ENCODE measurements at regions of chr3 and their contacts with region 1.

Region 1: GRCh38 chr3:138915503-138916498 is 31.1 kb downstream of the FOXL2 start:
- DNase-seq: peak; percentile 93
- H3K4me3 ChIP-seq: peak overlapping the region; percentile 64 to 91
- H3K27ac ChIP-seq: peak overlapping the region in 1 of 2 experiments; percentile 76; a peak in 2 of 4 replicates
- H3K4me1 ChIP-seq: peaks cover 0 to 3% of the 10 kb centered on the region in 2 experiments; a peak in 1 of 4 replicates
- H3K27me3 ChIP-seq: no peaks in the 10 kb centered on the region
- CTCF ChIP-seq: peak; percentile 82
- EP300 ChIP-seq: no peak
- RAD21 ChIP-seq: peak; percentile 65

Region 2: DNA sequence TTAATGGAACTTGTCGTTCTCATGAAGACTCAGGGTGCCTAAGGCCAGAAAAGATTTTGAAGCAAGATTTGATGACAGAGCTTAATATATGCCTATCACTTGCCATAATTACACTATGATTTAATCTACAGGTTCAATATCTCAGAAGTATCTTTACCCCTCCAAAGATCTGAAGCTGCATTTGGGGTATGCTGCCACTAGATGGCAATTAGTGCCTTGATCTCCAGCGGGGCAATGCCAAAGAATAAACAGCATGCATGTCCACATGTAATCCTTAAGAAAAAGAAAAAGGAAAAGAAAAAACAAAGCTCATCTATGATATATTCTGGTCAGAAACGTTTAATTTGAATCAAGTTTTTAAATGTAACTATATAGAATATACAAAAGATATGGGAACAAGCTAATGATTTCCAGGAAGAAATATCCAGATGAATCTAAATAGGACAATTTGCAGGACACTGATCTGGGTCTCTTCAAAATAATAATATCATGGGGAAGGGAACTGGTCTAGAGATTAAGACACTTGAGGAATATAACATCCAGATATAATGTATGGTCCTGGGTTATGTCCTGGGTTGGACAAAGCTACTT is 1206.7 kb before region 1 on chr3:
- CTCF ChIA-PET with region 1: no interaction called
- POLR2A ChIA-PET with region 1: no interaction called
- DNase-seq: peak; percentile 26
- H3K4me3 ChIP-seq: no peak overlapping the region
- H3K27ac ChIP-seq: no peak overlapping the region
- H3K4me1 ChIP-seq: peaks cover 0 to 4% of the 10 kb centered on the region in 2 experiments; a peak in 1 of 4 replicates
- H3K27me3 ChIP-seq: no peaks in the 10 kb centered on the region
- CTCF ChIP-seq: no peak
- EP300 ChIP-seq: no peak
- RAD21 ChIP-seq: peak; percentile 52

Region 3: GRCh38 chr3:138417559-138417982 is 498.2 kb before region 1 on chr3:
- CTCF ChIA-PET with region 1: interaction called, 22 read pairs
- POLR2A ChIA-PET with region 1: no interaction called
- DNase-seq: peak; percentile 80
- H3K4me3 ChIP-seq: peak overlapping the region in 1 of 2 experiments; percentile 17; a peak in 1 of 4 replicates
- H3K27ac ChIP-seq: no peak overlapping the region
- H3K4me1 ChIP-seq: no peaks in the 10 kb centered on the region; a peak in 2 of 4 replicates
- H3K27me3 ChIP-seq: no peaks in the 10 kb centered on the region
- CTCF ChIP-seq: peak; percentile 93
- EP300 ChIP-seq: no peak
- RAD21 ChIP-seq: peak; percentile 78

Region 4: DNA sequence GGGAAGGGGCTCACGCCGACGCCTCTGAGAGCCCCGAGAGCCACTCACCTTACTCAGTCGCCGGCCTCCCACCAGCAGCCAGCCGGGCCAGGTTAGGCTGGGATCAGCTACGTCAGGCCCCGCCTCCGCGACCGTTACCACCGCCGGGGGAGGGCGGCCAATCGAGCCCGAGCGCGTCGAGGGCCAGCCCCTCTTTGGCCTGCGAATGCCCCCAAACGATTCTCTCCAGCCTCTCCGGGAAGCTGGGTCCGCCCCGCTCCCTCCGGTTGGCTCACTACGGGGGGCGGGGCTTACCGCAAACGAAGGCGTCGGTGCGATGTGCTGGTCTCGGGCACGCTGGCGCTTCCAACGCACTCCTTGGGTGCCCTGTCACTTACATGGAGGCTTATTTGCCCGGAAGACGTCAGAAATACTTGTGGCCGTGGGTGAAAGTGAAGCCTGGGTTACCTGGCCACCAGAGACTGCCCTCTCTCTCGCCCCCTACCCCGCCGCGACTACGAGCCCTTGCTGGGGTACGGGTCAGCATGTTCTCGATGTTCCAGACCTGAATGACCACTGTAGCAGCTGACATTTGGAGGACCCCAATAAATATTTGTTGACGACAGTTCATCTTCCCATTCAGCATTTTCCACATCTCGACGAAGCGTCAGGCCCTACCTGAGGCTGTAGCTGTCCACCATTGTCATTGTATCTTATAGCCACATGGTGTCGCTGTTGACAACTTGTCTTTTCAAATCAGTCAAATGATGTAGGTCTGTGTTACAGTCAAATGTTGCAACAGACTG is 321.5 kb before region 1 on chr3 and contains the start of gene CEP70:
- CTCF ChIA-PET with region 1: interaction called, 272 read pairs
- POLR2A ChIA-PET with region 1: interaction called, 15 read pairs
- DNase-seq: peak; percentile 95
- H3K4me3 ChIP-seq: peak within 1 kb of the TSS; percentile 79 to 92
- H3K27ac ChIP-seq: peak within 1 kb of the TSS; percentile 72 to 85
- H3K4me1 ChIP-seq: peaks cover 0 to 7% of the 10 kb centered on the region in 2 experiments; a peak in 2 of 4 replicates
- H3K27me3 ChIP-seq: no peaks in the 10 kb centered on the region
- CTCF ChIP-seq: peak; percentile 88
- EP300 ChIP-seq: no peak
- RAD21 ChIP-seq: peak; percentile 90
- polyA plus RNA-seq, gene CEP70: 3.7 and 4.0 TPM in 2 replicates

Region 5: DNA sequence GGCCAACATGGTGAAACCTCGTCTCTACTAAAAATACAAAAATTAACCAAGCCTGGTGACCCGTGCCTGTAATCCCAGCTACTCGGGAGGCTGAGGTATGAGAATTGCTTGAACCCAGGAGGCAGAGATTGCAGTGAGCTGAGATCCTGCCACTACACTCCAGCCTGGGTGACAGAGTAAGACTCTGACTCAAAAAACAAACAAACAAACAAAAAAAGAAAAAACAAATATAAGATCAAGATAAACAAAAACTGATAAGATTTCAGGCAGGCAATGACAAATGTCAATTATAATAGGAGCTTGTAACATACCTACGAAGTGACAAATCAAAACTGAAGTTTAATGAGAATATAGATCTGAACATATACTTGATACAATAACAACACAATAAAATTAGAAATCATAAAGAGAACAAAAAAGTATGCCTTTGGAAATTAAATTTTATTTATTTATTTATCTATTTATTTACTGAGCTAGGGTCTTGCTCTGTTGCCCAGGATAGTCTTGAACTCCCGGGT is 236.9 kb before region 1 on chr3:
- CTCF ChIA-PET with region 1: interaction called, 10 read pairs
- POLR2A ChIA-PET with region 1: no interaction called
- DNase-seq: no peak
- H3K4me3 ChIP-seq: no peak overlapping the region
- H3K27ac ChIP-seq: no peak overlapping the region
- H3K4me1 ChIP-seq: no peaks in the 10 kb centered on the region
- H3K27me3 ChIP-seq: no peaks in the 10 kb centered on the region
- CTCF ChIP-seq: no peak
- EP300 ChIP-seq: no peak
- RAD21 ChIP-seq: no peak

Region 6: DNA sequence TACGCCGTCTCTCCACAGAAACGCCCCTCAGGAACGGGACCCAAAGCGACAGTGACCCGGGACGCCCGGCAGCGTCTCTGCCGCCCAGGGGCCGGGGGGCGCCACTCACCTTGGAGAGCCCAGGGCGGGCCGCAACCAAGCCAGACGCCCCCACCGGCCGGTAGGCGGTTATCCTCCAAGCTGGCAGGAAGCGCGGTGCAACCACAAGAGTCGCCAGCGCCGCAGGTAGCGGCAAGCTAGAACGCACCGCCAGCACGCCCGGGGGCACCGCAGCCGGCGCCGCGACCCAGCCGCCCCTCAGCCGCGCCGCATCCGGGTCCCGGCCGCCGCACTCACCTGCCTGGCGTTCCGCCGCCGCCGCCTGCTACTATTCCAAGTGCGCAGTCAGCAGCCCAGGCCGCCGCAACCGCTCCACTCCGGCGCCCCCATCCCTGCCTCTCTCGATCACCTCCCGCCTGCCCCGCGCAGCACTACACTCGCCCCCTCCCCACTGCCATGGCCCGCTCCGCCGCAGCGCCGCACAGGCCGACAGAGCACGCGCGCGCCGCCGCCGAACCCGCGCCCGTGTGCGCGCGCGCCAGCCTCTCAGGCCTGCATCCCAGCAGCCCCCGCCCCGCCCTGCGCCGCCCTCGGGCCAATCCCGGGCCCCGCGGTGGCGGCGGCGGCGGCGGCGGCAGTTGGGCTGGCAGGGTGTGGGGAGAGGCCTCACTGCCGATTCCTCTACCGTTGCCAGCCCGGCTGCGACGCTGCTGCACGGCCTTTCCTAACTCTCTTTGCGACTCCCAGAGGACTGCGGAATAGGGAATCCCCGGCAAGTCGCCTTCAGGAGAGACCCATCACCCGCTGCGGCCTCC is 81.2 kb before region 1 on chr3 and contains the start of gene PIK3CB:
- CTCF ChIA-PET with region 1: interaction called, 20 read pairs
- POLR2A ChIA-PET with region 1: interaction called, 3 read pairs
- DNase-seq: peak; percentile 97
- H3K4me3 ChIP-seq: peak within 1 kb of the TSS; percentile 64 to 92
- H3K27ac ChIP-seq: peak within 1 kb of the TSS; percentile 91 to 92
- H3K4me1 ChIP-seq: peaks cover 3 to 4% of the 10 kb centered on the region in 2 experiments; a peak in 2 of 4 replicates
- H3K27me3 ChIP-seq: no peaks in the 10 kb centered on the region
- CTCF ChIP-seq: peak; percentile 38; the same call in 1 of the 2 replicates
- EP300 ChIP-seq: no peak
- RAD21 ChIP-seq: peak; percentile 20; the same call in 1 of the 2 replicates
- polyA plus RNA-seq, gene PIK3CB: 6.8 and 6.9 TPM in 2 replicates

Region 7: GRCh38 chr3:138890555-138891187 is 25.1 kb before region 1 on chr3:
- CTCF ChIA-PET with region 1: interaction called, 10 read pairs
- POLR2A ChIA-PET with region 1: no interaction called
- DNase-seq: no peak
- H3K4me3 ChIP-seq: no peak overlapping the region
- H3K27ac ChIP-seq: no peak overlapping the region
- H3K4me1 ChIP-seq: no peaks in the 10 kb centered on the region
- H3K27me3 ChIP-seq: no peaks in the 10 kb centered on the region
- CTCF ChIP-seq: no peak
- EP300 ChIP-seq: no peak
- RAD21 ChIP-seq: no peak

Region 8: GRCh38 chr3:138941259-138941885 is 25.6 kb after region 1 on chr3:
- CTCF ChIA-PET with region 1: interaction called, 24 read pairs
- POLR2A ChIA-PET with region 1: no interaction called
- DNase-seq: peak; percentile 74
- H3K4me3 ChIP-seq: no peak overlapping the region; a peak in 1 of 4 replicates
- H3K27ac ChIP-seq: no peak overlapping the region
- H3K4me1 ChIP-seq: peaks cover 0 to 6% of the 10 kb centered on the region in 2 experiments; a peak in 2 of 4 replicates
- H3K27me3 ChIP-seq: peaks cover 97% of the 10 kb centered on the region
- CTCF ChIP-seq: peak; percentile 59
- EP300 ChIP-seq: no peak
- RAD21 ChIP-seq: peak; percentile 27; the same call in 1 of the 2 replicates

Region 9: DNA sequence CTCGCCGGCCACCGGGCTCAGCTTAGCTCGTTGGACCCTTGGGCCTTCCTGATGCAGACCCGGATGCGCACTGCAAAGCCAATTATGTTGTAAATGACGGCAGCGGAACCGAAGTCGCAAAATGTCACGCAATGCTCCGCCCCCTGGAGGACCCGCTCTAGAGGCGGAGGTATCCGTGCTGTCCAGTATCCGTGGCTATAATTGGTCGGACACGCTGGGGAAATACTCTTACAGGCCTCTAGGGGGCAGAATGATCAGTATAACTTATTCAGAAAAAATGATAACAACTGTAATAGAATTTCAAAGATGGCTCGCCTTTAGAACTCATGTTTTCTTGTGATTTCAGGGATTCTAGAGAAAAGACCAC is 105.0 kb after region 1 on chr3 and contains the start of gene PRR23B:
- CTCF ChIA-PET with region 1: no interaction called
- POLR2A ChIA-PET with region 1: no interaction called
- DNase-seq: peak; percentile 44
- H3K4me3 ChIP-seq: no peak within 1 kb of the TSS
- H3K27ac ChIP-seq: no peak within 1 kb of the TSS
- H3K4me1 ChIP-seq: no peaks in the 10 kb centered on the region
- H3K27me3 ChIP-seq: no peaks in the 10 kb centered on the region
- CTCF ChIP-seq: peak; percentile 46
- EP300 ChIP-seq: no peak
- RAD21 ChIP-seq: no peak
- polyA plus RNA-seq, gene PRR23B: not detected in 2 replicates